ENCODE measurements at regions of chr1 and their contacts with region 1.

Region 1: GRCh38 chr1:233364695-233365539 is 37.4 kb downstream of the MAP3K21 start:
- DNase-seq: peak; percentile 24
- H3K4me3 Mint-ChIP-seq: peak overlapping the region; percentile 15
- H3K27ac Mint-ChIP-seq: peak overlapping the region; percentile 52
- H3K4me1 Mint-ChIP-seq: peaks cover 84% of the 10 kb centered on the region
- H3K27me3 Mint-ChIP-seq: no peaks in the 10 kb centered on the region
- CTCF ChIP-seq: peak; percentile 45

Region 2: DNA sequence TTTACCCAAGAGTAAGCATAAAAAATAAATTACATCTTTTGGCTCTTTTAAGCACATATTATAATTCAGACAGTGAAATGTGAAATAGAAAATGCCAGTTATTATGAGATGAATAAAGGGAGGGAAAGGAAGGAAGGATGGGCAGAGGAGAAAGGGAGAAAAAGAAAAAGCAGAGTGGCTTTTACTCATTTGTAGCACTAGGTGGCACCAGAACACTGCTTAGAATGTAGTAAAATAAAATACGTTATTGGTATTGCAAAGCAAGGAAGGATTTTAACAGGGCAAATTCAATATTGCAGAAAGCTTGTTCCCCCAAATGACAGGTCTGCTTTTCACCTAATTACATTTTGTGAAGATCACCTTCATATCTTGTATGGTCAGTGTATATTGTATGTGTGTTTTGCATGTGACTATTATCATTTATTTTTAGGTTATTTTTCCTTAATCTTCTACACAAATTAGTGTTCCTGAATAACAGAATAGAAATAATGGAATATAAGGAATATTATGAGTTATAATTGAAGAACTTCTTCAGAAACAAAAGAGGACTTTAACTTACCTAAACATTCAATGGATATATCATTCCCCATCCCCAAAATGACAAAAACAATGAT is 60.3 kb before region 1 on chr1:
- CTCF ChIA-PET with region 1: interaction called, 7 read pairs
- intact Hi-C with region 1: loop called (anchors 5 kb)
- DNase-seq: no peak
- H3K4me3 Mint-ChIP-seq: no peak overlapping the region
- H3K27ac Mint-ChIP-seq: no peak overlapping the region
- H3K4me1 Mint-ChIP-seq: peaks cover 8% of the 10 kb centered on the region
- H3K27me3 Mint-ChIP-seq: no peaks in the 10 kb centered on the region
- CTCF ChIP-seq: peak; percentile 67

Region 3: DNA sequence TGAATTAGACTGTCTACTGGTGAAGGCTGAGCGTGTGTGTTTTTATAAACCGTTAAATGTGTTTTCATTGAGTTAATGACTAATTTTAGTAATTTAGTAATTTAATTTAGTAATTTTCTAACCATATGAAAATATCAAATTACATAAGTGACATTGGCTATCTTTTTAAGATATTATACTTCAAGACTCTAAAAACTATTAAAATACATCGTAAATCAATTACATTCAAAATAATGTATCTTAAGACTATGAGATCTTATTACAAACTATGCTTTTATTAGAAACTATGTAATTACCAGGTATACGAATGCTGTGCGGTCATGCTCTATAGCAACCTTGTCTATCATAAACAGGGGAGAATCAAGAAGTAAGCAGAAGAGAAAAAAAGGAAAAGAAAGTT is 15.8 kb before region 1 on chr1:
- CTCF ChIA-PET with region 1: interaction called, 3 read pairs
- intact Hi-C with region 1: loop called (anchors 2 kb)
- DNase-seq: no peak
- H3K4me3 Mint-ChIP-seq: no peak overlapping the region
- H3K27ac Mint-ChIP-seq: no peak overlapping the region
- H3K4me1 Mint-ChIP-seq: peaks cover 27% of the 10 kb centered on the region
- H3K27me3 Mint-ChIP-seq: no peaks in the 10 kb centered on the region
- CTCF ChIP-seq: no peak

Region 4: DNA sequence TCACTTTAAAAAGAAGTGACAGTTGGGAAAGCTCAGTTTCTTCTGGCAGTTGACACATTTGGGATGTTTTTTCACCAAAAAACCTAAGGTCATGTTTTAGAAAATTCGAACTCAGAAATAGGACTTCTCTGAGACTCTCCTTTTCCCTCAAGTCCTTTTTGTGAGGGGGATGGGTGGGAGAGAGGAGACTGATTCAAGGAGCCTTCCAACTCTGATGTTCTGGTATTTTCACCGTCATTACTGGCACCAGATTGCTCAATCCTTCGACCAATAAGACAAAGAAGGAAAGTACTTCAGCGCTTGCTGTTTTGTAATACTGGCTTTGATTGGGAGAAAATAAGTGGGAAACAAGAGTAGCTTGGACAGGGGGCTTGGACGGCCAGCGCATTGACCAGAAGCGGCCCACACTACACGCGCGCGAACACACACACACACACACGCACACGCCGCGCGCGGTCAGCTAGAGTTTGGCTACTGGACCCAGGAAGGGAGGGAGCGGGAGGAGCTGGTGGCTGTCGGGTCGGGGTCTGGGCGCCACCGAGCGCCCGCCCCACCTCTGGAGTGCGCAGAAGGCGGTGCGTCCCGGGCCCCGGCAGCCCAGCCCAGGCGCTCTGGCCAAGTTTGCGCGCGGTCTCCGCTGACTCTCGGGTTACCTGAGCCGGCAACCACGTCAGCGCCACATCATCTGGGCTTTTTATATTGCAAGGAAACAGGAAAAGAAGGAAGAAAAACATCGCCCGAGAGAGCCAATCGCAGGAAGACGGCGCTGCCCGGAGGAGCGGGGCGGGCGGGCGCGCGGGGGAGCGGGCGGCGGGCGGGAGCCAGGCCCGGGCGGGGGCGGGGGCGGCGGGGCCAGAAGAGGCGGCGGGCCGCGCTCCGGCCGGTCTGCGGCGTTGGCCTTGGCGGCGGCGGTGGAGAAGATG is 248.6 kb after region 1 on chr1 and contains the start of gene KCNK1:
- CTCF ChIA-PET with region 1: no interaction called
- intact Hi-C with region 1: loop called (anchors 10 kb)
- DNase-seq: peak; percentile 90
- H3K4me3 Mint-ChIP-seq: peak within 1 kb of the TSS; percentile 89
- H3K27ac Mint-ChIP-seq: peak within 1 kb of the TSS; percentile 77
- H3K4me1 Mint-ChIP-seq: peaks cover 22% of the 10 kb centered on the region
- H3K27me3 Mint-ChIP-seq: no peaks in the 10 kb centered on the region
- CTCF ChIP-seq: no peak
- total RNA-seq, gene KCNK1: 38.0 and 39.2 TPM in 2 replicates

Region 5: GRCh38 chr1:233675893-233676292 is 311.0 kb after region 1 on chr1:
- CTCF ChIA-PET with region 1: no interaction called
- intact Hi-C with region 1: loop called (anchors 5 kb)
- DNase-seq: no peak
- H3K4me3 Mint-ChIP-seq: no peak overlapping the region
- H3K27ac Mint-ChIP-seq: peak overlapping the region; percentile 73
- H3K4me1 Mint-ChIP-seq: peaks cover 51% of the 10 kb centered on the region
- H3K27me3 Mint-ChIP-seq: no peaks in the 10 kb centered on the region
- CTCF ChIP-seq: no peak